Activated B cell treated with CpG ODN at 0.5 μM for 24 hours (primary cell): ENCODE measurements at regions of chr9 and their contacts with region 1.

Region 1: DNA sequence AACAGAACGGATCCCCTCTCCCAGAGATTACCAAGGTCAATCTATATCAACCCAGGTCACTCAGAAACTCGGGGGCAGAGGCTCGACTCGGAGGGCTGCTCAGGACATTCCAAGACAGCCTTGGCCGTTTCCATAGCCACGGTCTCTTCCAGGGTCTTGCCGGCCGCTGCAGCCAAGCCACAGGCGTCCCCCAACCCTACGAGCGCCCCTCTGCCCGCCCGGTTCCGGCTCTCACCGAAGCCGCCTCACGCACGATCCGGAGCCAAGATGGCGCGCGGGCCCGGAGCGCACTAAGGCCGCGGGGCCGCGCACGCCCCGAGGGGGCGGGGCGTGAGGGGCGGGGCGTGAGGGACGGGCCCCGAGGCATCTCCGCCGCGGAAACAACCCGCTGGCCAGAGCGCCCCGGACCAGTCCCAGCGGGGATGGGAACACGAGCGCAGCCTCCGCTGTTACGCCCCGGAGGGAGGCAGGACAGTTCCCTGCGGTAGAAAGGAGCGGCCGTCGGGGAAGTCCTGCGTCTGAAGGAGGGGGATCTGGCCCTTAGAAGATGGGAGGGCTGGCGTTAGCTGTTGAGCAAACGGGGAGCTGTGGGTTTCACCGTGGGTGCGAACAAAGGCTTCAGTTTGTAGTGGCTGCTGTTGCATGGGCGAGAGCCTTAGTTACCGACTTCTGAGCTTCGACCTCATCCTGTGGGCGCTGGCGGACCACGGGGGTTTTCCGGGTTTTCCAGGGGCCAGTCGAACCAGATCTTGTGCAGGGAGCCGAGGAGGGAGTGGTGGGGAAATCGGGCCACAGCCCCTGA is at the start of gene RPP25L:
- DNase-seq: peak; percentile 90
- ATAC-seq: peak; percentile 96
- H3K4me3 Mint-ChIP-seq: peak within 1 kb of the TSS; percentile 86
- H3K27ac Mint-ChIP-seq: peak within 1 kb of the TSS; percentile 90
- H3K4me1 Mint-ChIP-seq: peaks cover 19% of the 10 kb centered on the region
- H3K27me3 Mint-ChIP-seq: no peaks in the 10 kb centered on the region
- CTCF ChIP-seq: no peak
- total RNA-seq, gene RPP25L: 17.5 and 18.9 TPM in 2 replicates

Region 2: GRCh38 chr9:33473643-33474352 is 1138.2 kb before region 1 on chr9 and contains the start of gene NOL6:
- CTCF ChIA-PET with region 1: no interaction called
- POLR2A ChIA-PET with region 1: no interaction called
- intact Hi-C with region 1: loop called (anchors 10 kb)
- DNase-seq: peak; percentile 93
- ATAC-seq: peak; percentile 99
- H3K4me3 Mint-ChIP-seq: peak within 1 kb of the TSS; percentile 99
- H3K27ac Mint-ChIP-seq: peak within 1 kb of the TSS; percentile 94
- H3K4me1 Mint-ChIP-seq: peaks cover 28% of the 10 kb centered on the region
- H3K27me3 Mint-ChIP-seq: no peaks in the 10 kb centered on the region
- CTCF ChIP-seq: no peak
- total RNA-seq, gene NOL6: 59.9 and 60.1 TPM in 2 replicates

Region 3: DNA sequence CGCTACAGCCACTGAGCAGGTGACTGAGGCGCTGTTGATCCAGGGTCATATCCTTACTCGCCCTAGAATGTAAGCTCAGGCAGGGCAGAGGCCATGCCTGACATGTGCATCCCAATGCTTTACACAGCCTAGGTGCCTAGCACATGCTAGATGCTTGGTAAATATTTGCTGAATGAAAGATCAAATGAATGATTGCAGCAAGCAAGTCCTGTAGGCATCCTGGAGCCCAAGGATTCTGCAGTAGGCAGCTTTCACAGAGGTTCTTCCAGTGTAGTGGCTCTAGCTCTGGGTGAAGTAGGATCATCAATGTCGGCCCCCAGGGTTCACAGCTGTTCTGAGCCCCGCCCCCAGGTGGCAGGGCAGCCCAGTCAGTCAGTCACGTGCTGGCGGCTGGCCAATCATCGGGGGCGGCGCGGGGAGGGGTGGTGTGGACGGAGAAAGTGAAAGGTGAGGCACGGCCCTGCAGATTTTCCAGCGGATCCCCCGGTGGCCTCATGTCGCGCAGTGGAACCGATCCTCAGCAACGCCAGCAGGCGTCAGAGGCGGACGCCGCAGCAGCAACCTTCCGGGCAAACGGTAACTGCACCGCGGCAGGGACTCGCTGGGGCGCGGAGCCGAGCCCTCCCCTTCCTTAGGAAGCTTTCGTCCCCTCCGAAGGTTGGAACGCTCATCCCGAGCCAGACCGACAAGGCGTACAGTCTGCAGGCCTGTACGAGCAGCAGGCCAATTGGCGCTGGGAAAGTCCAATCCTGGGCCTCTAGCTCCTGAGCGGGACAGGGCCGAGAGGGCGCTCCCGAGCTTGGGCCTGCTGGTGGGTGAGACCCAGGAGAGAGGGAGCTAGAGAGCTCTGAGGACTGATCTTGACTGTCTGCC is 34.4 kb after region 1 on chr9 and contains the start of gene GALT:
- CTCF ChIA-PET with region 1: no interaction called
- POLR2A ChIA-PET with region 1: interaction called, 8 read pairs
- intact Hi-C with region 1: loop called (anchors 5 kb)
- DNase-seq: peak; percentile 96
- ATAC-seq: peak; percentile 96
- H3K4me3 Mint-ChIP-seq: peak within 1 kb of the TSS; percentile 92
- H3K27ac Mint-ChIP-seq: peak within 1 kb of the TSS; percentile 80
- H3K4me1 Mint-ChIP-seq: peaks cover 25% of the 10 kb centered on the region
- H3K27me3 Mint-ChIP-seq: no peaks in the 10 kb centered on the region
- CTCF ChIP-seq: no peak
- total RNA-seq, gene GALT: 55.9 and 62.5 TPM in 2 replicates

Region 4: GRCh38 chr9:34665381-34666250 is 53.6 kb after region 1 on chr9:
- CTCF ChIA-PET with region 1: interaction called, 3 read pairs
- POLR2A ChIA-PET with region 1: no interaction called
- intact Hi-C with region 1: loop called (anchors 1 kb)
- DNase-seq: peak; percentile 75
- ATAC-seq: peak; percentile 90
- H3K4me3 Mint-ChIP-seq: peak overlapping the region; percentile 88
- H3K27ac Mint-ChIP-seq: peak overlapping the region; percentile 87
- H3K4me1 Mint-ChIP-seq: peaks cover 11% of the 10 kb centered on the region
- H3K27me3 Mint-ChIP-seq: no peaks in the 10 kb centered on the region
- CTCF ChIP-seq: no peak

Region 5: DNA sequence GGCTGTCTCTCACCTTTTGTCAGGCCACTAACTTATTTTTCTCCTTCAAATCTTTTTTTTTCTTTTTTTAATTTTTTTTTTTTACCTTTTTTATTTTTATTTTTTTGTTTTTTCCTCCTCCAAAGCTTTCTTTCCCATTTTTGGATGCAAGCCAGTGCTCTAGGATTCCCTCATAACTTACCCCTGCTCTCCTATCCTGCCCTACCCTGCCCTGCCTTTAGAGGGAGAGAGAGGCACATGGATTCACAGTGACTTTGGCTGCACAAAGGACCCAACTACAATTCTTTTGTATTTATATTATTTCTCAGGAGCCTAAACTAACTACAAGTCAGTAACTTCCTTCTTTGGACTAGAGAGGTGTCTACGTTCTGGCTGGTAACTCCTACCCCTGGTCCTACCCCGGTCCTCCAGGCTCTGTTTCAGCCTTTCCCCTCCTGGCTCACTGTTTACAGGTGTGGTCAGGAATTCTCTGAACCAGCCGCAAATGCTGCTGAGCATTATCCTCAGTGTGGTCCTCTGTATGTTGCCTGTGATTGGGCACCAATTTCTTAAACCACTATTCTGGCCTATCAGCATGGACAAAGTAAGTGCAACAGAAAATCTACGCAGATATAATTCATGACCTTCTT is 869.4 kb after region 1 on chr9:
- CTCF ChIA-PET with region 1: no interaction called
- POLR2A ChIA-PET with region 1: no interaction called
- intact Hi-C with region 1: loop called (anchors 5 kb)
- DNase-seq: no peak
- ATAC-seq: peak; percentile 66
- H3K4me3 Mint-ChIP-seq: no peak overlapping the region
- H3K27ac Mint-ChIP-seq: no peak overlapping the region
- H3K4me1 Mint-ChIP-seq: no peaks in the 10 kb centered on the region
- H3K27me3 Mint-ChIP-seq: peaks cover 10% of the 10 kb centered on the region
- CTCF ChIP-seq: no peak